Activated CD4-positive, alpha-beta memory T cell treated with anti-CD3 and anti-CD28 coated beads for 36 hours (primary cell): ENCODE measurements at regions of chr2 and their contacts with region 1.

Region 1: GRCh38 chr2:73926493-73927338 is at the start of gene DGUOK:
- DNase-seq: peak; percentile 99
- H3K4me3 Mint-ChIP-seq: peak within 1 kb of the TSS; percentile 92
- H3K27ac Mint-ChIP-seq: peak within 1 kb of the TSS; percentile 95
- H3K4me1 Mint-ChIP-seq: peaks cover 45% of the 10 kb centered on the region
- H3K27me3 Mint-ChIP-seq: no peaks in the 10 kb centered on the region
- total RNA-seq, gene DGUOK: 101 to 102 TPM

Region 2: DNA sequence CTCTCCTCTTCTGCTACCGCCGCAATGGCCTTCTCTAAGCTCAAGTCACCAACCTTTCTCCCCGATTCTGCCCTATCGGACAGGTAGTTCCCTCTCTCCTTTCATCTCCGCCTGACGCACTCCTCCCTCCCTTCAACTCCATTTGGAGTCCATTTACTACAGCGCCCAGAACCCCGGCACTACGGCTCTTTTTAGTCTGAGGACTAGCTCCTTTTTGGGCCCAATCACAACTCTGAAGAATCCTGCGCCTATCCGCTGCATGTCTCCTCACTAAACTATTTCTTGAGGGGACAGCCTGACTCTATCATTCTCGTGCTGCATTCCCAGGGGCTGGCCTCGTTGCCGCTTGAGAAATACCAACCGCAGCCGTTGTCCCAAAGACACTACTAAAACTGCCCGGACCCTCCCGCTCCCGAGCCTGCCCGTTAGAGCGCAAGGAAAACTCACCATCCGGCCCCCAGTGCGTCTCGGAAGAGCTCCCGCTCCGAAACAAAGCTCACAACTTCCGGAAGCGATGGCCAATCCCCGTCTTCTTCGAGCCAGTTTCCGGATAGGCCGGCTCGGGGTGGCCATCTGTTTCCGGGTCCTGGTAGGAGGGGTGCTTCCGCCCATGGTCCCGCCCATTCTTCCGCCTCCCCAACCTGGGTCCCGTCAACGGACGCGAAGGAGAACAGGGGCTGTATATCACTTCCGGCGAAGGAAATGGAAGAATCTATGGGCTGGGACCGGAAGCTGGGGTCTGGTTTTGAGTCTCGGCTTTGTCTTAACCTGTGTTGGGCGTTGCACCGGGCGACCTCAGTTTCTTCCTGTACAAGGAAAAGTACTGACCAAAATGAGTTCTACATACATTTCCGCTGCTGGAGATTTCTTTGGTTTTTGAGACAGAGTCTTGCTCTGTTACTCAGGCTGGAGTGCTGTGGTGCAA is 189.6 kb before region 1 on chr2 and contains the start of gene TPRKB:
- CTCF ChIA-PET with region 1: no interaction called
- POLR2A ChIA-PET with region 1: no interaction called
- intact Hi-C with region 1: loop called (anchors 5 kb)
- DNase-seq: peak; percentile 98
- H3K4me3 Mint-ChIP-seq: peak within 1 kb of the TSS; percentile 93
- H3K27ac Mint-ChIP-seq: peak within 1 kb of the TSS; percentile 75
- H3K4me1 Mint-ChIP-seq: peaks cover 20% of the 10 kb centered on the region
- H3K27me3 Mint-ChIP-seq: no peaks in the 10 kb centered on the region
- total RNA-seq, gene TPRKB: 33.2 to 34.6 TPM

Region 3: GRCh38 chr2:73886357-73886756 is 40.4 kb before region 1 on chr2:
- CTCF ChIA-PET with region 1: no interaction called
- POLR2A ChIA-PET with region 1: no interaction called
- intact Hi-C with region 1: loop called (anchors 2 kb)
- DNase-seq: peak; percentile 67
- H3K4me3 Mint-ChIP-seq: no peak overlapping the region
- H3K27ac Mint-ChIP-seq: no peak overlapping the region
- H3K4me1 Mint-ChIP-seq: peaks cover 18% of the 10 kb centered on the region
- H3K27me3 Mint-ChIP-seq: peaks cover 3% of the 10 kb centered on the region

Region 4: GRCh38 chr2:73985308-73986084 is 58.8 kb after region 1 on chr2:
- CTCF ChIA-PET with region 1: interaction called, 3 read pairs
- POLR2A ChIA-PET with region 1: interaction called, 4 read pairs
- intact Hi-C with region 1: loop called (anchors 1 kb)
- DNase-seq: peak; percentile 80
- H3K4me3 Mint-ChIP-seq: peak overlapping the region; percentile 82
- H3K27ac Mint-ChIP-seq: peak overlapping the region; percentile 95
- H3K4me1 Mint-ChIP-seq: peaks cover 71% of the 10 kb centered on the region
- H3K27me3 Mint-ChIP-seq: no peaks in the 10 kb centered on the region

Region 5: GRCh38 chr2:74178201-74179062 is 251.7 kb after region 1 on chr2 and contains the start of gene MOB1A:
- CTCF ChIA-PET with region 1: no interaction called
- POLR2A ChIA-PET with region 1: no interaction called
- intact Hi-C with region 1: loop called (anchors 10 kb)
- DNase-seq: peak; percentile 99
- H3K4me3 Mint-ChIP-seq: peak within 1 kb of the TSS; percentile 83
- H3K27ac Mint-ChIP-seq: peak within 1 kb of the TSS; percentile 76
- H3K4me1 Mint-ChIP-seq: peaks cover 45% of the 10 kb centered on the region
- H3K27me3 Mint-ChIP-seq: no peaks in the 10 kb centered on the region
- total RNA-seq, gene MOB1A: 159 to 170 TPM